ENCODE measurements at regions of chr2 and their contacts with region 1.

Region 1: GRCh38 chr2:127029350-127030051 is 77.5 kb downstream of the BIN1 start:
- DNase-seq: no peak
- H3K4me3 ChIP-seq: no peak overlapping the region
- H3K27me3 ChIP-seq: no peaks in the 10 kb centered on the region
- CTCF ChIP-seq: no peak

Region 2: GRCh38 chr2:126586317-126586716 is 443.2 kb before region 1 on chr2:
- CTCF ChIA-PET with region 1: no interaction called
- POLR2A ChIA-PET with region 1: no interaction called
- DNase-seq: no peak
- H3K4me3 ChIP-seq: no peak overlapping the region
- H3K27me3 ChIP-seq: no peaks in the 10 kb centered on the region
- CTCF ChIP-seq: no peak

Region 3: GRCh38 chr2:126657148-126657635 is 372.3 kb before region 1 on chr2:
- CTCF ChIA-PET with region 1: no interaction called
- POLR2A ChIA-PET with region 1: interaction called, 19 read pairs
- DNase-seq: peak; percentile 87
- H3K4me3 ChIP-seq: peak overlapping the region; percentile 50
- H3K27me3 ChIP-seq: no peaks in the 10 kb centered on the region
- CTCF ChIP-seq: no peak

Region 4: DNA sequence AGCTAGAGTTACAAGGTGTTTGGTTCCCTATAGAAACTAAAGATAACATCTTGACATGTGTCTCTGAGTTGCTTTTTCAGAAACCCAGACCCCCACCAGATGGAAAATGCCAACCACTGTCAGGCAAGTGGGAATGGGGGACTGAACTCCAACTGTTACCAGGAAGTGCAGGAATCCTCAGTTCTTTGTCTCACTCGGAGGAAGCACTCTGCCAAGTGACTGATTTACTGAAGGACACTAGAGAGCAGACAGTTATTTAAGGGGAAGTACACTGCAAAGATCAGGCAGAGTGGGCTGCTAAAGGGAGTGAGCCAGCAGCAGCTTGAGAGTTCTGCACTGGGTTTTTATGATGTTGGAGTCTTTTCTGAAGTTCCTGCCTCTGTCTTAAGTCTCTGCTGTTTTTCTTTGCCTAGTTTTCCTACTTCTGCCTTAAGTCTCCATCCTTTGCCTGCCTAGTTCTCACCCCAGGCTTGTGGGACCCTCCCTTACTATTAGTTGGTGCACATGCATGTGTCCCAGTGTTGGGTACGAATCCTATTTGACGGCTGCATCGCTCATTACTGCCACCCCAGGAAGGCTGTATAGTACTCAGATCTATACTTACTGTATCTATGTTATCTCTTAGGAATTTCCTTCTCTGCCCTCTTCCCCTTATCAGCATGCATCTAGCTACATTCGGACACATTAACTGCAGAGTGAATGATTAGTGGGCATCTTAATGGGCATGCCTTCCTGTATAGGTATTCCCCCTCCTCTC is 33.7 kb before region 1 on chr2:
- CTCF ChIA-PET with region 1: no interaction called
- POLR2A ChIA-PET with region 1: no interaction called
- DNase-seq: no peak
- H3K4me3 ChIP-seq: no peak overlapping the region
- H3K27me3 ChIP-seq: peaks cover 5% of the 10 kb centered on the region; the same call in 1 of the 2 replicates
- CTCF ChIP-seq: no peak